Left lung (tissue), 14 donors: ENCODE measurements at regions of chr6 and their contacts with region 1.

Region 1: GRCh38 chr6:45714741-45715507 is 300.7 kb downstream of the CLIC5 start:
- DNase-seq: peak in 2 of 4 donors; percentile 73 to 87
- ATAC-seq: peak; percentile 97
- H3K4me3 ChIP-seq: no peak overlapping the region
- H3K27ac ChIP-seq: no peak overlapping the region
- H3K4me1 ChIP-seq: peaks cover 0 to 4% of the 10 kb centered on the region in 2 donors
- H3K27me3 ChIP-seq: no peaks in the 10 kb centered on the region
- CTCF ChIP-seq: peak; percentile 70 to 73

Region 2: DNA sequence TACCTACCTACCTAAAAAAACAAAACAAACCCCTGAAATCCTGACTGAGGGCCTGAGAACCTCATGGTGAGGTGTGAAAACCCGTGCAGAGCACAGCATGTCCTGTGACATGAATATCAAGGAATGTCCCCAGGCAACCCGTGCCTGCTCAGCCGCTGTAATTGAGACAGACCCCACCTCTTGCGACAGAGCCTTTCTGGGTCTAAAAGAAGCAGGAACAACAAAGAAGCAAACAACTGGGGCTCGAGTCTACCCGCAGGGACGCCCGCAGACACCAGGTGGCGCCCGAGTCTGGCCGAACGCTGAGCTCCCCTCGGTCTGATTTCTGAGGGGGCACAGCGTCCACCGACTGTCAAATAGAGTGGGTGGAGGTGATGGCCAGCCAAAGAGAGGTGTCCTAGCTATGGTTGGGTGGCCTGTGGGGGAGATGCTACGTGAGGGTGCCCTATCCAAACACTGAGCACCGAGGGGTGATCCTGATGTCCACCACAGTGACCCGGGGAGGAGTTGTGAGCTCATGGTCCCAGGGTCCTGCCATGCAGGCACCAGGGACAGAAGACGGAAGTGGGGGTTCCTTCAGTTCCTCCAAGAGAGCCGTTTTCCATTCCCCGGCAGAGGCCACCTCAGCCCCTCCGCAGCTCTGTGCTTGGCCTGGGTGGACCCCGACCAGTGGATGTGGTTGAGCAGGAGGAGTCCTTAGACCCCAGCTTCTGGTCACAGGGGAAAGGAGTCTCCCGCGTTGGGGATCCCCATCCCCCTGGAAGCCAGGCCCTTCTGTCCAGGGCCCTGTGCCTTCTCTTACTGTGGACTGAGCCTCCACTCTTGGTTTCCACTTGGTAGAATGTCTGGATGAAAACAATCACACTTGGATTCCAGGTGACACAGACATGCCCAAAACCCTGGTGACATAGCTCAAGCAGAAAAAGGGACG is 1059.2 kb before region 1 on chr6:
- intact Hi-C with region 1: loop called in 1 of 2 experiments (anchors 10 kb)
- DNase-seq: peak; percentile 71 to 89 (median 84)
- ATAC-seq: peak; percentile 89
- H3K4me3 ChIP-seq: no peak overlapping the region
- H3K27ac ChIP-seq: no peak overlapping the region
- H3K4me1 ChIP-seq: peaks cover 5 to 12% of the 10 kb centered on the region in 2 donors
- H3K27me3 ChIP-seq: peaks cover 0 to 10% of the 10 kb centered on the region in 2 donors
- CTCF ChIP-seq: peak; percentile 85 to 87

Region 3: DNA sequence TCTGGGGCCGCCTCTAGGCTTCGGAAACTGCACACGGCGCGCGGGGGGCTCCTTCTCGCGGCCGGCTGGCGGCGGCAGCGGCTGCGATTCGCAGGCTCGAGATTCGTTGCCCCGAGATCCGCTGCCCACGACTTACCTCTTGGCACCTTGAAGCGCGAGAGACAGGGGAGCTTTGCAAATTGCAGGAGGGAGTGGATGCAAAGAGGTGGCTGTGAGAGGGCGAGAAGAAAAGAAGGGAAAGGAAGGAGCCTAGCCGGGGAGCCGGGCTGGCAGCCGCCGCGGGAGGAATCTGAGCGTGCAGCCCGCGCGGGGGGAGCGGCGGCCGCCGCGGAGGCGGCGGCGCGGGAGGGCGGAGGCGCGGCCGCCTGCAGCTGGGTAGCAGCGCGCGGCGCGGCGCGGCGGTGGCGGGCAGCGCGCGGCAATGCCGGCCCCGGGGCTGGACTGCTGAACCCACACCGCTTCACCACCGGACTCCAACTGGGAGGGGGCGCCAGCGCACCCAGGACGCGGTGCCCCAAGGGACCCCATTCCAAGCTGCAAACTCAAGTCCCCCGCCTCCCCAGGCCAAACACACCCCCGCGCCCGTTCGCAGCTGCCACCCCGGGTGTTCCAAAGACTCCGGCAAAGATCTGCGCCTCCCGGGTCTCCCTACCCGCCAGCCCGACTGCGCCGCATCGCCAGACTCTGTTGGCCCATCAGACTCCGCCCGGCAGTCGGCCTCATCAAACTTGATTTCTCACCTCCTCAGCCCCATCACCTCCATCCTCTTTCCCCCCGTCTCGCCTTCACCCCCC is 293.0 kb before region 1 on chr6:
- intact Hi-C with region 1: loop called in 1 of 2 experiments (anchors 10 kb)
- DNase-seq: peak in 3 of 4 donors; percentile 55 to 91 (median 79)
- ATAC-seq: peak; percentile 65
- H3K4me3 ChIP-seq: peak overlapping the region; percentile 55 to 69
- H3K27ac ChIP-seq: peak overlapping the region; percentile 71 to 84
- H3K4me1 ChIP-seq: peaks cover 9 to 48% of the 10 kb centered on the region in 2 donors
- H3K27me3 ChIP-seq: peaks cover 24 to 79% of the 10 kb centered on the region in 2 donors
- CTCF ChIP-seq: no peak

Region 4: GRCh38 chr6:45626087-45626891 is 88.6 kb before region 1 on chr6:
- intact Hi-C with region 1: no loop called
- DNase-seq: no peak
- ATAC-seq: peak; percentile 70
- H3K4me3 ChIP-seq: no peak overlapping the region
- H3K27ac ChIP-seq: no peak overlapping the region
- H3K4me1 ChIP-seq: peaks cover 0 to 8% of the 10 kb centered on the region in 2 donors
- H3K27me3 ChIP-seq: no peaks in the 10 kb centered on the region
- CTCF ChIP-seq: no peak

Region 5: GRCh38 chr6:46053039-46053933 is 338.4 kb after region 1 on chr6:
- intact Hi-C with region 1: no loop called
- DNase-seq: peak in 1 of 4 donors; percentile 46
- ATAC-seq: peak; percentile 70
- H3K4me3 ChIP-seq: no peak overlapping the region
- H3K27ac ChIP-seq: peak overlapping the region; percentile 73 to 86
- H3K4me1 ChIP-seq: peaks cover 20 to 33% of the 10 kb centered on the region in 2 donors
- H3K27me3 ChIP-seq: no peaks in the 10 kb centered on the region
- CTCF ChIP-seq: no peak